ENCODE measurements at regions of chr2 and their contacts with region 1.

Region 1: GRCh38 chr2:191218292-191218898 is 26.8 kb upstream of the MYO1B start:
- DNase-seq: peak; percentile 75
- H3K4me3 Mint-ChIP-seq: no peak overlapping the region
- H3K27ac Mint-ChIP-seq: no peak overlapping the region
- H3K4me1 Mint-ChIP-seq: peaks cover 27% of the 10 kb centered on the region
- H3K27me3 Mint-ChIP-seq: no peaks in the 10 kb centered on the region

Region 2: GRCh38 chr2:191171708-191172355 is 46.6 kb before region 1 on chr2:
- intact Hi-C with region 1: loop called (anchors 2 kb)
- DNase-seq: no peak
- H3K4me3 Mint-ChIP-seq: no peak overlapping the region
- H3K27ac Mint-ChIP-seq: peak overlapping the region; percentile 52
- H3K4me1 Mint-ChIP-seq: peaks cover 69% of the 10 kb centered on the region
- H3K27me3 Mint-ChIP-seq: no peaks in the 10 kb centered on the region

Region 3: GRCh38 chr2:191202881-191203397 is 15.5 kb before region 1 on chr2:
- intact Hi-C with region 1: loop called (anchors 2 kb)
- DNase-seq: peak; percentile 75
- H3K4me3 Mint-ChIP-seq: peak overlapping the region; percentile 25
- H3K27ac Mint-ChIP-seq: peak overlapping the region; percentile 74
- H3K4me1 Mint-ChIP-seq: peaks cover 39% of the 10 kb centered on the region
- H3K27me3 Mint-ChIP-seq: no peaks in the 10 kb centered on the region

Measured in activated CD4-positive, alpha-beta T cell treated with anti-CD3 and anti-CD28 coated beads, Interleukin-2, amount 10 ng/mL, durations not matched to agents 24 days and 14 days (primary cell).